GM12878 (cell line): ENCODE measurements at regions of chr10 and their contacts with region 1.

Region 1: DNA sequence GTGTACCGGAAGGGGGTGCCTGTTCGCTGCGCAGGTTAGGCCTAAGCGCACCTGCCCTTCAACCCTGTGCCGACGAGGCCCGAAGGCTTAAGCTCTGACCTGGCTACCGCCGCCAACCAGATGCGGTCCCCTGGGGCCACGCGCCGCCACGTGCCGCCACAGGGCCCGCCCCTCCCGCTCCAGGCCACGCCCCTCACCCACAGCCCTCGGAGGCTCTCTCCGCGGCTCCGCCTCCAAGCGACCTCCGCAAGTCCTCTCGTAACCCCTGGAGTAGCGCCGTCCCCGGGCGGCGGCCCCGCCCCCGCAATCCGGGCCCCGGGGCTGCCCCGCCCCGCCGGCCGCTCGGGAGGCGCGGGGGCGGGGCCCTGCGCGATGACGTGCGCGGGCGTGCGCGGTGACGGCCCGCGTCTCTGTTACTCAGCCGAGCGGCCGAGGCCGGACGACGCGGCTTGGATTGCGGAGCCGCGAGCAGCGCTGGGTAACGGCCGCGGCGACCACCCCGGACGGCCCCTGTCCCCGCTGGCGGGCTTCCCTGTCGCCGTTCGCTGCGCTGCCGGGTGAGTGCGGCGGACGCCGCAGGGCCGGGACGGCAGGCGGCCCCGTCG is at the start of gene MAPK8:
- DNase-seq: peak; percentile 69
- ATAC-seq: peak; percentile 81
- H3K4me3 ChIP-seq: peak within 1 kb of the TSS; percentile 92
- H3K27ac ChIP-seq: peak within 1 kb of the TSS; percentile 66
- H3K4me1 ChIP-seq: peaks cover 14% of the 10 kb centered on the region
- H3K27me3 ChIP-seq: no peaks in the 10 kb centered on the region
- CTCF ChIP-seq: no peak
- EP300 ChIP-seq: no peak
- POLR2A ChIP-seq: peak; percentile 95
- RAD21 ChIP-seq: no peak
- polyA plus RNA-seq, gene MAPK8: 3.9 to 4.3 TPM

Region 2: GRCh38 chr10:48289501-48290238 is 16.7 kb before region 1 on chr10:
- CTCF ChIA-PET with region 1: interaction called, 87 read pairs
- POLR2A ChIA-PET with region 1: interaction called, 11 read pairs
- RAD21 ChIA-PET with region 1: interaction called, 31 read pairs
- SMC1A ChIA-PET with region 1: interaction called, 82 read pairs
- in situ Hi-C with region 1: no loop called
- intact Hi-C with region 1: loop called (anchors 2 kb)
- DNase-seq: no peak
- ATAC-seq: peak; percentile 60
- H3K4me3 ChIP-seq: no peak overlapping the region
- H3K27ac ChIP-seq: no peak overlapping the region
- H3K4me1 ChIP-seq: peaks cover 34% of the 10 kb centered on the region
- H3K27me3 ChIP-seq: no peaks in the 10 kb centered on the region
- CTCF ChIP-seq: peak; percentile 80 to 91 (median 86)
- EP300 ChIP-seq: no peak
- POLR2A ChIP-seq: no peak
- RAD21 ChIP-seq: peak; percentile 86

Region 3: DNA sequence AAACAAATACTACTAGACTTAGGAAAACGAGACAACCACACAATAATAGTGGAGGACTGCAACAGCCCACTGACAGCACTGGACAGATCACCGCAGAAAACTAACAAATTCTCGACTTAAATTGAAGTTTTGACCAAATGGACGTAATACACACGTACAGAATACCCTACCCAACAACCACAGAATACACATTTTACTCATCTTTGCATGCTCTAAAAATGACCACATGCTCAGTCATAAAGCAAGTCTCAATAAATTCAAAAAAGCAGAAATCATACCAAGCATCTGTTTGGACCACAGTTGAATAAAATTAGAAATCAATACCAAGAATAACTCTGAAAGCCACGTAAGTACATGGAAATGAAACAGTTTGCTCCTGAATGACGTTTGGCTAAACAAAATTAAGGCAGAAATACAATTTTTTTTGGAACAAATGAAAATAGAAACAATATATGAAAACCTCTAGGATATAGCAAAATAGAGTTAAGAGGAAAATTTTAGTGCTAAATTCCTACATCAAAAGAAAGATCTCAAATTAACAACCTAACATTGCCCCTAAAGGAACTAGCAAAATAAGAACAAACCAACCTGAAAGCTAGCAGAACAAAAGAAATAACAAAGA is 30.7 kb after region 1 on chr10:
- CTCF ChIA-PET with region 1: interaction called, 20 read pairs
- POLR2A ChIA-PET with region 1: interaction called, 3 read pairs
- RAD21 ChIA-PET with region 1: interaction called, 4 read pairs
- SMC1A ChIA-PET with region 1: interaction called, 13 read pairs
- in situ Hi-C with region 1: no loop called
- intact Hi-C with region 1: loop called (anchors 2 kb)
- DNase-seq: peak; percentile 85
- ATAC-seq: peak; percentile 92
- H3K4me3 ChIP-seq: peak overlapping the region; percentile 26; the same call in 1 of the 2 replicates
- H3K27ac ChIP-seq: peak overlapping the region; percentile 67
- H3K4me1 ChIP-seq: peaks cover 21% of the 10 kb centered on the region
- H3K27me3 ChIP-seq: no peaks in the 10 kb centered on the region
- CTCF ChIP-seq: no peak
- EP300 ChIP-seq: peak; percentile 99; a peak in 3 of 4 replicates
- POLR2A ChIP-seq: no peak
- RAD21 ChIP-seq: no peak

Region 4: DNA sequence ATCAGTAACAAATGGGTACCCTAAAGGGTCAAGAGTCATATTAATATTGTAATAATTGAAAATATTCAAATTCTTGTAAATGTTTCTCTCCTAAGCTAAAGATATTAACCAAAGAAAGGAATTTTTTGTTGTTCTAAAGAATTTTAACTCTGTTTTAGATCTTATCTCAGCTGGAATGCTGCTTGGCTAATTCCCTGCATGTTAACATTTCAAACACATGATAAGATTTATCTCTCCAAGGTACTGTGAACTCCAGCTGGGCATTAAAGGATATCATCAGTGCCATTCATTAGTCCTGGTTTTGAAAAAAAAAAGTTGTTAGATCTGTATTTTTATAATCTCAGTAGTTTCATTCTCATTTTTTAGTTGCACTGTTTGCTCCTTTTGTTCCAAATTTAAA is 77.0 kb after region 1 on chr10:
- CTCF ChIA-PET with region 1: interaction called, 13 read pairs
- POLR2A ChIA-PET with region 1: no interaction called
- RAD21 ChIA-PET with region 1: interaction called, 3 read pairs
- SMC1A ChIA-PET with region 1: interaction called, 4 read pairs
- in situ Hi-C with region 1: no loop called
- intact Hi-C with region 1: no loop called
- DNase-seq: no peak
- ATAC-seq: no peak
- H3K4me3 ChIP-seq: no peak overlapping the region
- H3K27ac ChIP-seq: no peak overlapping the region
- H3K4me1 ChIP-seq: no peaks in the 10 kb centered on the region
- H3K27me3 ChIP-seq: no peaks in the 10 kb centered on the region
- CTCF ChIP-seq: no peak
- EP300 ChIP-seq: no peak
- POLR2A ChIP-seq: no peak
- RAD21 ChIP-seq: no peak

Region 5: DNA sequence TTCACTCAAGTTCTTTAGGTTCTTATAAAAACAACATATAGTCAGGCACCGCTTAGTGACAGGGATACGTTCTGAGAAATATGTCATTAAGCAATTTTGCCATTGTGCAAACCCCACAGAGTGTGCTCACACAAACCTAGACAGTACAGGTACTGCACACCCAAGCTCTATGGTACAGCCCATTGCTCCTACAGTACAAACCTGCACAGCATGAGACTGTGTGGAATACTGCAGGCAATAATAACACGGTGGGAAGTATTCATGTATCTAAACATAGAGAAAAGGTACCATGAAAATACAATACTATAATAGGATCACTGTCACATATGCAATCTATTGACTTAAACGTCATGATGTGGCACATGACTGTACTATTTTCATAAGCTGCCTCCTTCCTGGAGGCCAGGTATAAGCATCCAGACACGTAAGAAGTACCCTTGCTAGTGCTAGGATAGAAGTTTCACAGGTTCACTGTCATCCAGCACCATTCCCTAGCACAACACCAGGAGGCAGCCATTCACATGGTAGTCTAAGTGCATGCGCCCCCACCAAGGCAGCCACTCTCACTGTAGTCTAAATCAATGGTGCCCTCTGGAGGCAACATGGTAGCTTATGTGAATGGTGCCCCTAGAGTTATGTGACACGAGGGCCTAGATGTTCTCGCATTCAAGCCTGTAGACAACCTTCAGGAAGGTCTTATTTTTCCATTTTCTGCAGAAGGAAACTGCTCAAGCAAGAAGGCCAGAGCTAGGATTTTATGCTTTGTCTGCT is 200.0 kb after region 1 on chr10:
- CTCF ChIA-PET with region 1: interaction called, 5 read pairs
- POLR2A ChIA-PET with region 1: no interaction called
- RAD21 ChIA-PET with region 1: interaction called, 5 read pairs
- SMC1A ChIA-PET with region 1: interaction called, 6 read pairs
- in situ Hi-C with region 1: no loop called
- intact Hi-C with region 1: loop called (anchors 5 kb)
- DNase-seq: no peak
- ATAC-seq: peak; percentile 60
- H3K4me3 ChIP-seq: no peak overlapping the region
- H3K27ac ChIP-seq: no peak overlapping the region
- H3K4me1 ChIP-seq: peaks cover 6% of the 10 kb centered on the region
- H3K27me3 ChIP-seq: no peaks in the 10 kb centered on the region
- CTCF ChIP-seq: peak; percentile 35 to 55 (median 54); a peak in 5 of 6 replicates
- EP300 ChIP-seq: no peak
- POLR2A ChIP-seq: no peak
- RAD21 ChIP-seq: peak; percentile 68

Region 6: DNA sequence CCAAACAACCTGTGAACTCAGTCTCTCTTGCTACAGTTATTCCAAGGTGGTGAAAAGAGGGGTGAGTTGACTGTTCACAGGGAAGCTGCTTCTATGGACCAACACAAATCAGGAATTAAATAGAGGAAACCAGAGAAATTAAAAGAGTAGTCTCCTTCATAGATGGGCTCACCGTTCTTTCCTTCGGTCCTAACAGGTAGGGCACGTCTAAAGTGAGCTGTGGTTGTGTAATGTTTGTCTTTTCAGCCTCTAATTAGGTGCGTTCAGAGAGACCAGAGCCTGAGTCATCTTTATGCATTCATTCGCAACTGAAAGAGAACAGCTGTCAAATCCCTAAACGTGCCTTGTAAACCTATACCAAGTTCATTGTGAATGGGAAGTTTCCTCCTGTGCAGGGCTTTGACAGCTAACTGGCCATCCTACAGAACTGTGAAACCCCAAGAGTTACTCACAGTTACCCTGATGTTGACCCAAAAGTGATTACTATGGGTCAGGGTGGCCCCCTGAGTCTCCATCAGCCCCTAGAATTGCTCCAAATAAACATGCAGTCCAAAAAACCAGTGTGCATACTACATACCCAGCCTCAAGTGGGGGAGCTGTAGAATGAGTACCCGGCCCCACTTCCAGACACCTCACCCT is 1355.0 kb after region 1 on chr10:
- CTCF ChIA-PET with region 1: no interaction called
- POLR2A ChIA-PET with region 1: no interaction called
- RAD21 ChIA-PET with region 1: no interaction called
- SMC1A ChIA-PET with region 1: no interaction called
- in situ Hi-C with region 1: no loop called
- intact Hi-C with region 1: no loop called
- DNase-seq: no peak
- ATAC-seq: no peak
- H3K4me3 ChIP-seq: no peak overlapping the region
- H3K27ac ChIP-seq: no peak overlapping the region
- H3K4me1 ChIP-seq: no peaks in the 10 kb centered on the region
- H3K27me3 ChIP-seq: no peaks in the 10 kb centered on the region; a peak in 2 of 4 replicates
- CTCF ChIP-seq: no peak
- EP300 ChIP-seq: no peak
- POLR2A ChIP-seq: no peak
- RAD21 ChIP-seq: no peak